ENCODE measurements at regions of chr10 and their contacts with region 1.

Region 1: DNA sequence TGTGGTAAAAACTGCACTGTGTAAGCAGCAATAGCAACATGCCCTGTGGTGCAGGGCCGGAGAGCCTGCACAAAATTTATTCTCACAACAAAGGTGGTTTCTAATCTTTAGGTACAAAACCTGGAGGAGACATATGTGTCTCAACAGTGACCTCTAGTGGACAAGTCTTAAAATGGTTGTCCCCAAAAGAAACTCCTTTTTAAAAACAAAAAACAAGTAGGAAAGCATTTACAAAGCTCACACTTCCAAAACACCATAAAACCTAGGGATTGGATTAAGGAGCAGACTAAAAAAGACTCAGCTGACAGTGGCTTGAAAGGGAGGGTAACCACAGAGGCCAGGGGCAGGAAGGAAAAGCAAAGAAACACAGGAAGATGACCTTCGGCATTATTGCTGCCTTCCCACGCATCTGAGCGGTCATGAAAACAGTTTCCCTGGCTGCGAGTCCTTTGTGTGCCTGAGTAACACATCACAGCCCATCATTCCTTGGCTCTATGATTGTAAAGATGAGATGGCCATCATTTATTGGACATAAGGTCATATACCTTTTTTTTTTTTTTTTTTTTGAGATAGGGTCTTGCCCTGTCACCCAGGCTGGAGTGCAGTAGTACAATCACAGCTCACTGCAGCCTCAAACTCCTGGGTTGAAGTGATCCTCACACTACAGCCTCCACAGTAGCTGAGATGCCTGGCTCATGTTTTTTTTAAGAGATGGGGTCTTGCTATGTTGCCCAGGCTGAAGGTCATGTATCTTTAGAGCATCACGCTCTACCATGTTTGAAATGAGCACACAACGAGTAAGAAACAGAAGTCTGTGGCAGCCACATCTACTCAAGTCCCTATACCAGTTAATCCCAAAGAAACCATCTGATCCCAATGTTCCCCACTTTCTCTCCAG is 39.5 kb downstream of the RSU1 start:
- DNase-seq: peak in 1 of 2 experiments; percentile 49
- H3K4me3 ChIP-seq: no peak overlapping the region
- H3K4me3 Mint-ChIP-seq: no peak overlapping the region
- H3K27ac Mint-ChIP-seq: no peak overlapping the region
- H3K4me1 ChIP-seq: no peaks in the 10 kb centered on the region
- H3K4me1 Mint-ChIP-seq: no peaks in the 10 kb centered on the region
- H3K27me3 ChIP-seq: no peaks in the 10 kb centered on the region
- H3K27me3 Mint-ChIP-seq: no peaks in the 10 kb centered on the region
- CTCF ChIP-seq: peak; percentile 79 to 85

Region 2: GRCh38 chr10:15879058-15879457 is 898.7 kb before region 1 on chr10:
- CTCF ChIA-PET with region 1: interaction called, 4 read pairs
- POLR2A ChIA-PET with region 1: no interaction called
- intact Hi-C with region 1: loop called (anchors 1 kb)
- DNase-seq: peak in 1 of 2 experiments; percentile 36
- H3K4me3 ChIP-seq: no peak overlapping the region
- H3K4me3 Mint-ChIP-seq: no peak overlapping the region
- H3K27ac Mint-ChIP-seq: no peak overlapping the region
- H3K4me1 ChIP-seq: no peaks in the 10 kb centered on the region
- H3K4me1 Mint-ChIP-seq: no peaks in the 10 kb centered on the region
- H3K27me3 ChIP-seq: no peaks in the 10 kb centered on the region
- H3K27me3 Mint-ChIP-seq: peaks cover 20% of the 10 kb centered on the region
- CTCF ChIP-seq: peak; percentile 64 to 74

Region 3: DNA sequence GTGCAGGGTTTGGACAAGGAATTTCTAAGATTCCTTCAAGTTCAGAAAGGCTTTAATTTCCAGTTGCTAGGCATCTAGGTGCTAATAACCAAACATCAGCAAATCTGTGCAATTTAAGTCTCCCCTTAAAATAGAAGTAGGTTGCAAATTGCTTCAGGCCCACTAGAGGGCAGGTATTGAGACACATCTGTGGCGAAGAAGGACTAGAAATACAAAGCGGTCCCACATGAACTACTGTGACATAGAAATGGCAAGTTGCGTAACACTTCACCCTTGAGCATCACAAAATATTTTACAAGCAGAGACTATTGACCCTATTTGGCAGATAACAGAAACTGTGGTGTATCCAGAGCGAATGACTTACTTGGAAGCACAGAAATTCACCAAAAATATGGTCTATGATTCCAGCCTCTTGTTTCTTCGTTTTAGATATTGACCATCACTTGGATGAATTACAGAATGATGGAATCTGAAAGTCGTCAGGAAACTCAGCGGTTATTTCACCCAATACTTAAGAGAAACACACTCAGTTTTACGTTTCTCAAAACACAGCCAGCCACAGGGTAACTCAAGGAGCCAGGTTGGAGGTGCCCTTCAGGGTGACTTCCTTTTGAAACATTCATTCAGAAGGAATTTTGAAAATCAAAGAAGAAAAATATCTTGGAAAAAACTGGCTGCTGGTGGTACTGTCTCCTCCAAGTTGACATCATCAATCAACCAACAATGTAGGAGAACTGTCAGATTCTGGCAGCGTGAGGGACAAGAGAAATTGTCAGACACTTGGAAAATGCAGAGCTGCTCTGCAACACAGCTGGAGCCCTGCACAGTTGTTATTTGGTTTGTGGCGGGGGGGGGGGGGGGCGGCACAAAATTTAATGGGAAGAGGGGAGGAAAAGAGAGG is 661.1 kb before region 1 on chr10:
- CTCF ChIA-PET with region 1: no interaction called
- POLR2A ChIA-PET with region 1: no interaction called
- intact Hi-C with region 1: loop called (anchors 1 kb)
- DNase-seq: peak in 1 of 2 experiments; percentile 47
- H3K4me3 ChIP-seq: no peak overlapping the region
- H3K4me3 Mint-ChIP-seq: no peak overlapping the region
- H3K27ac Mint-ChIP-seq: no peak overlapping the region
- H3K4me1 ChIP-seq: no peaks in the 10 kb centered on the region
- H3K4me1 Mint-ChIP-seq: no peaks in the 10 kb centered on the region
- H3K27me3 ChIP-seq: no peaks in the 10 kb centered on the region
- H3K27me3 Mint-ChIP-seq: peaks cover 15% of the 10 kb centered on the region
- CTCF ChIP-seq: peak; percentile 75 to 80

Region 4: DNA sequence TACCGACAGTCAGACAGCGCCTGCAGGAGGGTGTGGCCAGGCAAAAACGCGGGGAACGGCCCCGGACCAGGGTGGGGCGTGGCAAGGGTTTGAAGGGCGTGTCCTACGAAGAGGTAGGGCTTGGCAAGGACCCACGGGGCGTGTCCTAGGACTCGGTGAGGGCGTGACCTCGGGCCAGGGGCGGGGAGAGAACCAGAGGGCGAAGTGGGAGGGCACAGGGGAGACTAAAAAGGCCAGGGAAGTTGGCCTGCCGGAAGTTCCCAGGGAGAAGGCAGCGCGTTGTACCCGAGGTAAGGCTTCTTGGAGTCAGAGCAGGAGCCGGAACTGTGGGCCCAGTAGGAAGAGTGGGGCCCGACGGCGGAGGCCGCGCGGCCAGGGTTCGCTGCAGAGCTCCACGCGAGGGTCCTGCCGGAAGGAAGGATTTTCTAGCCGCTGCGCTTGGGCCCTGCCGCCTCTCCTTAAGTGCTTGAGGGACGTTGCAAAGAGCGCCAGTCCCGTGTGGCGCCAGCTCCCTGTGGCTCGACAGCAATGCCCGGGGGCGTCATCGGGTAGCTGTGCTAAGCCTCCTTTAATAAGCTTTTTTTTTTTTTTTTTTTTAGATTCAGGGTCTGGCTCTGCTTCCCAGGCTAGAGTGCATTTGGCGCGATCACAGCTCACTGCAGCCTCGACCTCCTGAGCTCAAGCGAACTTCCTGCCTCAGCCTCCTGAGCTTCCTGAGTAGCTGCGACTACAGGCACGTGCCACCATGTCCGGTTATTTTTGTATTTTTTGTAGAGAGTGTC is 340.8 kb before region 1 on chr10 and contains the start of gene PTER:
- CTCF ChIA-PET with region 1: no interaction called
- POLR2A ChIA-PET with region 1: no interaction called
- intact Hi-C with region 1: loop called (anchors 1 kb)
- DNase-seq: peak; percentile 100
- H3K4me3 ChIP-seq: peak within 1 kb of the TSS; percentile 58
- H3K4me3 Mint-ChIP-seq: peak within 1 kb of the TSS; percentile 86
- H3K27ac Mint-ChIP-seq: peak within 1 kb of the TSS; percentile 85
- H3K4me1 ChIP-seq: peaks cover 7% of the 10 kb centered on the region
- H3K4me1 Mint-ChIP-seq: peaks cover 6% of the 10 kb centered on the region
- H3K27me3 ChIP-seq: no peaks in the 10 kb centered on the region
- H3K27me3 Mint-ChIP-seq: peaks cover 6% of the 10 kb centered on the region
- CTCF ChIP-seq: no peak
- total RNA-seq, gene PTER: 25.8 and 27.4 TPM in 2 replicates

Region 5: DNA sequence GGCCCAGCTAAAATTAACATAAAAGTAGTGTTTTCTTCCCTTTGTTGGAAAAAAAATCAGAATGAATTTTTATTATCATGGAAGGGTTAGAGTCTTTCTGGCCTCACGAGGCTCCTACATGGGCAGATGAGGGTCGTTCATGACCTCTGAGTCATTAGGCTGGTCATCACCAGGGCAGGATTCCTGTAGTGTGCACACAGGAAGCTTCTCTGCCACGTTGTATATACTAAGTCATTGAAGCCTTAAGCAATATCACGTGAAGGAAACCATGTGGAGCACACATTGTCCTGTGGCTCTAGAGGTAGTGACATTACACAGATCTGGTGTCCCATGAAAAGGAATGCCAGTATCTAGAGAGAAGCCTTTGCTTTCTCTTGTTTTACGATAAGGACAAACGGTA is 171.3 kb before region 1 on chr10:
- CTCF ChIA-PET with region 1: no interaction called
- POLR2A ChIA-PET with region 1: no interaction called
- intact Hi-C with region 1: loop called (anchors 10 kb)
- DNase-seq: no peak
- H3K4me3 ChIP-seq: no peak overlapping the region
- H3K4me3 Mint-ChIP-seq: no peak overlapping the region
- H3K27ac Mint-ChIP-seq: no peak overlapping the region
- H3K4me1 ChIP-seq: peaks cover 14% of the 10 kb centered on the region
- H3K4me1 Mint-ChIP-seq: peaks cover 14% of the 10 kb centered on the region
- H3K27me3 ChIP-seq: no peaks in the 10 kb centered on the region
- H3K27me3 Mint-ChIP-seq: no peaks in the 10 kb centered on the region
- CTCF ChIP-seq: no peak

Region 6: DNA sequence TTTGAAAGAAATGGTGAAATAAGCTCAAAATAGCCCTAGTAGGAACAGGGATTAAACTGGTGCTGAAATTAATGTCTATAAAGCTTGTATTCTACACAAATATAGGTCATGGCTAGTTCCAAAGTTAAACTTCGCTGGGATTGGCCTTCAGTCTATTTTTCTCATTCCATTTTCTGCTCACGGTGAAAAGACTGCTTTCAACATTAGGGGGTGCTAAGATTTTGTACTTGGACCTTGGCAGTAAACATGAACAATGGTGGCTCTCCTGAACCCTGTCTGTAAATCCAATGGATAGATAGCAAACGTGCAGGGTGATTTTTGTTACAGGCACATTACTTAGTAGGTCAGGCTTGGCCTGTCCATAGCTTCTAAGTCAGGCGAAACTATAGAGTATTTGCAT is 75.5 kb after region 1 on chr10:
- CTCF ChIA-PET with region 1: no interaction called
- POLR2A ChIA-PET with region 1: no interaction called
- intact Hi-C with region 1: no loop called
- DNase-seq: peak in 1 of 2 experiments; percentile 12
- H3K4me3 ChIP-seq: no peak overlapping the region
- H3K4me3 Mint-ChIP-seq: no peak overlapping the region
- H3K27ac Mint-ChIP-seq: no peak overlapping the region
- H3K4me1 ChIP-seq: no peaks in the 10 kb centered on the region
- H3K4me1 Mint-ChIP-seq: peaks cover 6% of the 10 kb centered on the region
- H3K27me3 ChIP-seq: no peaks in the 10 kb centered on the region
- H3K27me3 Mint-ChIP-seq: peaks cover 19% of the 10 kb centered on the region
- CTCF ChIP-seq: peak in 1 of 2 experiments; percentile 16